Activated CD4-positive, alpha-beta memory T cell treated with anti-CD3 and anti-CD28 coated beads for 36 hours (primary cell): ENCODE measurements at regions of chr6 and their contacts with region 1.

Region 1: GRCh38 chr6:116561377-116562018 is 7.9 kb downstream of the CALHM4 start:
- DNase-seq: peak; percentile 76
- H3K4me3 Mint-ChIP-seq: no peak overlapping the region
- H3K27ac Mint-ChIP-seq: no peak overlapping the region
- H3K4me1 Mint-ChIP-seq: peaks cover 2% of the 10 kb centered on the region
- H3K27me3 Mint-ChIP-seq: peaks cover 23% of the 10 kb centered on the region

Region 2: GRCh38 chr6:115613488-115613887 is 948.0 kb before region 1 on chr6:
- CTCF ChIA-PET with region 1: no interaction called
- POLR2A ChIA-PET with region 1: no interaction called
- intact Hi-C with region 1: no loop called
- DNase-seq: no peak
- H3K4me3 Mint-ChIP-seq: no peak overlapping the region
- H3K27ac Mint-ChIP-seq: no peak overlapping the region
- H3K4me1 Mint-ChIP-seq: no peaks in the 10 kb centered on the region
- H3K27me3 Mint-ChIP-seq: no peaks in the 10 kb centered on the region

Region 3: DNA sequence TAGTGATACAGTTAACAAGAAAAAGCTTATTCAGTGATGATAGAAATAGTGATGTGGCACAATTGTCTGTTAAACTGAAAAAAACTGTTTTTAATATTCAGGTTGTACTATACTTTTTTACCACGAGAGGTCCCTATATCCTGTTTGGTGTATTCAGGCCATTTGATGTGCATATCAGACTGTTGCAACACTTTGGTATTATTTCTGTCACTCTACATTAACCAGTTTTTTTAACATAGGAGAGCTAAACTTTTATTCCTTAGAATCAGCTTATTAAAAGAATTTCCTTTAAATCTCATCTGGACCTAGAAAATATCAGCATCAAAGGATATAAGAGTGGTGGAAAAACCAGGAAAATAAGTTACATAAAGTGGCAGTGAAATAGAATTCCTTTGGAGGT is 344.4 kb before region 1 on chr6:
- CTCF ChIA-PET with region 1: interaction called, 14 read pairs
- POLR2A ChIA-PET with region 1: no interaction called
- intact Hi-C with region 1: loop called (anchors 1 kb)
- DNase-seq: no peak
- H3K4me3 Mint-ChIP-seq: no peak overlapping the region
- H3K27ac Mint-ChIP-seq: no peak overlapping the region
- H3K4me1 Mint-ChIP-seq: no peaks in the 10 kb centered on the region
- H3K27me3 Mint-ChIP-seq: no peaks in the 10 kb centered on the region

Region 4: GRCh38 chr6:116268589-116269293 is 292.8 kb before region 1 on chr6:
- CTCF ChIA-PET with region 1: interaction called, 15 read pairs
- POLR2A ChIA-PET with region 1: no interaction called
- intact Hi-C with region 1: no loop called
- DNase-seq: no peak
- H3K4me3 Mint-ChIP-seq: no peak overlapping the region
- H3K27ac Mint-ChIP-seq: peak overlapping the region; percentile 4
- H3K4me1 Mint-ChIP-seq: peaks cover 23% of the 10 kb centered on the region
- H3K27me3 Mint-ChIP-seq: no peaks in the 10 kb centered on the region

Region 5: GRCh38 chr6:116287689-116288282 is 273.7 kb before region 1 on chr6:
- CTCF ChIA-PET with region 1: interaction called, 29 read pairs
- POLR2A ChIA-PET with region 1: no interaction called
- intact Hi-C with region 1: no loop called
- DNase-seq: no peak
- H3K4me3 Mint-ChIP-seq: no peak overlapping the region
- H3K27ac Mint-ChIP-seq: no peak overlapping the region
- H3K4me1 Mint-ChIP-seq: no peaks in the 10 kb centered on the region
- H3K27me3 Mint-ChIP-seq: no peaks in the 10 kb centered on the region

Region 6: DNA sequence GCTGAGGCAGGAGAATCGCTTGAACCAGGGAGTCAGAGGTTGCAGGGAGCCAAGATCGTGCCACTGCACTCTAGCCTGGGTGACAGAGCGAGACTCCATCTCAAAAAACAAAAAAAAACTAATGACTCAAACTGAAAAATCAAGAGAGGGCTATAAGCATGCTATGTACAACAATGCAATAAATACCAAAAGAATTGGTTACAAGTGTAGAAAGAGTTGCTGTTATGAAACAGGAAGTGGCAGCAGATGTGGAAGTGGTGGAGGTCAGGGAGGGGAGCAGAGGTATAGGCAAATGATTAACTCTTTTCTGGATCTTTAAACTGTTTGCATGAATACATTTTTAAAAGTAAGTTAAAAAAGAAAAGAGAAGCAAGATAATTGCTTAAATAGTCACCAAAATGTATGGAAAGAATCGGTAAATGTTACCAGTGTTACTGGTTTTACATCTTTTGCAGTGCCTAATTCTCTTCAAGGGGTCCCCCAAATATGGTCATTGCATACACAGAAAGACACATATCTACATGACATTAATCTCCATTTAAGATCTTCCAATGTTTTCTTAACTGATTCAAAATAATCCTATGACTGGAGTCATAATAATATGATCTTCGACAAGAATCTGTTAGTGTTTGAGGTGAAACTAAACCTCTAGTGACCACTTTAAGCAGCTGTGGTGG is 85.4 kb before region 1 on chr6:
- CTCF ChIA-PET with region 1: no interaction called
- POLR2A ChIA-PET with region 1: no interaction called
- intact Hi-C with region 1: no loop called
- DNase-seq: peak; percentile 42
- H3K4me3 Mint-ChIP-seq: no peak overlapping the region
- H3K27ac Mint-ChIP-seq: no peak overlapping the region
- H3K4me1 Mint-ChIP-seq: peaks cover 18% of the 10 kb centered on the region
- H3K27me3 Mint-ChIP-seq: peaks cover 2% of the 10 kb centered on the region

Region 7: GRCh38 chr6:116542426-116542825 is 19.1 kb before region 1 on chr6:
- CTCF ChIA-PET with region 1: interaction called, 27 read pairs
- POLR2A ChIA-PET with region 1: no interaction called
- intact Hi-C with region 1: no loop called
- DNase-seq: no peak
- H3K4me3 Mint-ChIP-seq: no peak overlapping the region
- H3K27ac Mint-ChIP-seq: no peak overlapping the region
- H3K4me1 Mint-ChIP-seq: no peaks in the 10 kb centered on the region
- H3K27me3 Mint-ChIP-seq: peaks cover 15% of the 10 kb centered on the region

Region 8: DNA sequence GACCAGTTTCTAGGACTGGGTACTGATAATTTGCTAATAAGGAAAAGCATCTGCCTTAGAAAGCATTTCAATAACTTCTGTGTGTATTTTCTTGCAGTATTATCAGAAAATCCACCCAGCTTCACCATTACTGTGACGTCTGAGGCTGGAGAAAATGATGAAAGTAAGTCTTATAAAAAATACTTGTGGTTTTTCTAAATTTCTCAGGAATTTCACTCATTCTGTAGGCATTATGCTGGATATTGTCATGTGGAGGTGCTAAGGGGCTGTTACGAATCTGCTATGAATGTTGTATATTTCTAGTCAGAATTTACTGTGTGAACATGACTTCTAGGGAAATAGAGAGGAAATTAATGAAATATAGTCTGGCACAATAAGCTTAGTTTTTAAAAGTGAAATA is 18.7 kb after region 1 on chr6:
- CTCF ChIA-PET with region 1: interaction called, 10 read pairs
- POLR2A ChIA-PET with region 1: no interaction called
- intact Hi-C with region 1: no loop called
- DNase-seq: no peak
- H3K4me3 Mint-ChIP-seq: no peak overlapping the region
- H3K27ac Mint-ChIP-seq: no peak overlapping the region
- H3K4me1 Mint-ChIP-seq: peaks cover 28% of the 10 kb centered on the region
- H3K27me3 Mint-ChIP-seq: no peaks in the 10 kb centered on the region